GM12878 (cell line): ENCODE measurements at regions of chr20 and their contacts with region 1.

Region 1: DNA sequence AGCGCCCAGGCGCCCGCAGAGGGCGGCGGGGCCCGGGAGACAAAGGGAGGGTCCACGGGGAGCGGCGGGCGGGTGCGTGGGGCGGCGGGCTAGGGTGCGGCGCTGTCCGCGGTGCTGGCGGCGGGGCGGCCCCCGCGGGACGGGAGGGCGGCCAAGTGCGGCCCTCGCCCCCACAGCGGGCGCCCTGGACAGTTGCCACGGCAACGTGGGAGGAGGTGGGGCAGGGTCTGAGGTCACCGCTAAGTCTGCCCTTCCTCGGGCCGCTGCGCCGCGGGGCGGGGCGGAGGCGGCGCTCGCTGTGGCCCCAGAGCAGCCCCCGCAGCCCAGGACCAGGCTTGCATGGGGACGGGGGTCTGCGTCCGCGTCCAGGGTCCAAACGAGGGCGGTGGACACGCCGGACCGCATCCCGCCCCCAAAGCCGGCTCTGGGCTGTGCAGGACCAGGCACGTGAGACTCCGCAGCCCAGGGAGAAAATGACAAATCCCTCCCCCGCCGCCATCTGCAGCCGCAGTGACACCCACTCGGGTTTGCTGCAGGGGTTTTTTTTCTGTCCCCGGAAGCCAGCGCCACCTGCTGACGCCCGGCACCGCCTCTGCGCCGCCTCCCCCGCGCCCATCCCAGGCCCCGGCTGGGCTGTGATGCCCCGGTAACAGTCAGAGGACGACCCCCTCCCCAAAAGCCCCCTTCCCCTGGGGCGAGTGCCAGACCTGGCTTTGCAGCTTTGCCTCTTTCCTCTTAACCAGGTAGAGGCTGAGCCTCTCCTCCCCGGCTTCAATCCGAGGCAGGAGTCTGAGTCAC is 36.8 kb downstream of the YTHDF1 start:
- DNase-seq: no peak
- ATAC-seq: peak; percentile 78
- H3K4me3 ChIP-seq: no peak overlapping the region; the same call in 1 of the 2 replicates
- H3K27ac ChIP-seq: no peak overlapping the region
- H3K4me1 ChIP-seq: no peaks in the 10 kb centered on the region
- H3K27me3 ChIP-seq: peaks cover 14 to 17% of the 10 kb centered on the region in 2 experiments
- CTCF ChIP-seq: peak; percentile 51 to 85 (median 75)
- EP300 ChIP-seq: no peak
- POLR2A ChIP-seq: no peak
- RAD21 ChIP-seq: peak; percentile 38

Region 2: DNA sequence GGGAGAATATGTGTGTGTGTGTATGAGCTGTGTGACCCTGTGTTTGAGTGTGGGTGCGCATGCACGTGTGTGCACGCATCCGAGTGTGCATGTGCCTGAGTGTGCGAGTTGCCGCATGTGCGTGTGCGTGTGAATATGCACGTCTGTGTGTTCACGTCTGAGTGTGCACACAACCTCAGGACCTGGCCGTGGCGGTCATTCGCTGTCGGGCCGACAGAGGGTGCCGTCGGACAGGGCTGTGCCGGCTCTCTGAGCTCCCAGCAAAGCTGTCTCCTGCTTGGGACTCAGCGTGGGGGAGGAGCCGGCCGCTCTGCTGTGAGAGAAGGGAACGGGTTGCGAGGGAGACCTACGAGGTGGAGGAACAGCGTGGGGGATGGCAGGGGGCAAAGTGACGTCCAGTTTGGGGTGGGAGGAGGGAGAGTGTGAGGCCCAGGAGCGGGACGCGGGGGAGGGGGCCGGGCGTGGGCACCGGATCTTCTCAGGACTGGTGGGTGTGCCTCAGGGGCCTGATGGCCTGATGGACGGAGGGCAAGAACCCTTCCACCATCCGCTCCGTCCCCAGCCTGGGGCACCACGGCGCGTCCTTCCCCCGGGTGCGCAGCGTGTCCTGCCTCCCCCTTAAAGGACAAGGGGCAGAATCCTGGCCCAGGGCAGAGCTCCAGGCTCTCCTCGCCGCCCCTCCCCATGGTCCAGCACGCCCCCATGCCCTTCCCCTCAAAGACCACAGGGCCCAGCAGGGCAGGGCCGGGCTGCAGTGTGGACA is 206.6 kb before region 1 on chr20:
- CTCF ChIA-PET with region 1: interaction called, 8 read pairs
- POLR2A ChIA-PET with region 1: no interaction called
- RAD21 ChIA-PET with region 1: interaction called, 3 read pairs
- SMC1A ChIA-PET with region 1: interaction called, 6 read pairs
- in situ Hi-C with region 1: no loop called
- intact Hi-C with region 1: loop called (anchors 2 kb)
- DNase-seq: peak; percentile 49
- ATAC-seq: peak; percentile 89
- H3K4me3 ChIP-seq: no peak overlapping the region
- H3K27ac ChIP-seq: no peak overlapping the region
- H3K4me1 ChIP-seq: peaks cover 15% of the 10 kb centered on the region
- H3K27me3 ChIP-seq: peaks cover 0 to 6% of the 10 kb centered on the region in 2 experiments; a peak in 2 of 4 replicates
- CTCF ChIP-seq: peak; percentile 96 to 98 (median 98); a peak in 5 of 6 replicates
- EP300 ChIP-seq: no peak; a peak in 1 of 4 replicates
- POLR2A ChIP-seq: no peak
- RAD21 ChIP-seq: peak; percentile 91

Region 3: GRCh38 chr20:63056236-63056948 is 122.7 kb before region 1 on chr20:
- CTCF ChIA-PET with region 1: interaction called, 8 read pairs
- POLR2A ChIA-PET with region 1: no interaction called
- RAD21 ChIA-PET with region 1: no interaction called
- SMC1A ChIA-PET with region 1: interaction called, 7 read pairs
- in situ Hi-C with region 1: no loop called
- intact Hi-C with region 1: loop called (anchors 2 kb)
- DNase-seq: no peak
- ATAC-seq: peak; percentile 77
- H3K4me3 ChIP-seq: no peak overlapping the region
- H3K27ac ChIP-seq: no peak overlapping the region
- H3K4me1 ChIP-seq: no peaks in the 10 kb centered on the region
- H3K27me3 ChIP-seq: no peaks in the 10 kb centered on the region
- CTCF ChIP-seq: peak; percentile 65 to 85 (median 65)
- EP300 ChIP-seq: no peak
- POLR2A ChIP-seq: no peak
- RAD21 ChIP-seq: peak; percentile 72

Region 4: GRCh38 chr20:63205896-63206295 is 26.8 kb after region 1 on chr20:
- CTCF ChIA-PET with region 1: no interaction called
- POLR2A ChIA-PET with region 1: no interaction called
- RAD21 ChIA-PET with region 1: no interaction called
- SMC1A ChIA-PET with region 1: no interaction called
- in situ Hi-C with region 1: no loop called
- intact Hi-C with region 1: no loop called
- DNase-seq: no peak
- ATAC-seq: no peak
- H3K4me3 ChIP-seq: no peak overlapping the region
- H3K27ac ChIP-seq: no peak overlapping the region
- H3K4me1 ChIP-seq: no peaks in the 10 kb centered on the region
- H3K27me3 ChIP-seq: no peaks in the 10 kb centered on the region
- CTCF ChIP-seq: no peak
- EP300 ChIP-seq: no peak
- POLR2A ChIP-seq: no peak
- RAD21 ChIP-seq: no peak